Cardiac septum (tissue), 1 donor: ENCODE measurements at regions of chr1 and their contacts with region 1.

Region 1: DNA sequence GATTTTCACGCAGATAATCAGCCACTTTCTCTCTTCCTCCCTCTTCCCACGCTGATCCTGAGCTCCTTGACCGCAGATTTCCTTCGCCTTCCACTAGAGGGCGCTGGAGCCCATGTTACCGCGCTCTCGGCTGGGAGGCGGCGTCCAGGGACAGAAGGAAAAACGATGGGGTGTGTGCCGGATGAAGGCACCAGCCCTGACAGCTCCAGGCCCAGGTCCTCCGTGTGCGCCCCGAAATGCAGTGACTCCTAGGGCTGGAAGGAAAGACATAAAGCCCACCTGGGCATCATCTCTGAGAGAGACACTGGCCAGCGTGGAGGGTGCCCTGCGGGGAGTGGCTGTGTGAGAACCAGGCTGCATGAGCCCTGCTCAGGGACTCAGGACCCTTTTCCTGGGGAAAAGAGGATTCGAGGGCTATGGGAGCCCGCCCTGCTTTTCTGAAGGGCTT is 44.9 kb upstream of the CYP2J2 start:
- DNase-seq: peak; percentile 83

Region 2: DNA sequence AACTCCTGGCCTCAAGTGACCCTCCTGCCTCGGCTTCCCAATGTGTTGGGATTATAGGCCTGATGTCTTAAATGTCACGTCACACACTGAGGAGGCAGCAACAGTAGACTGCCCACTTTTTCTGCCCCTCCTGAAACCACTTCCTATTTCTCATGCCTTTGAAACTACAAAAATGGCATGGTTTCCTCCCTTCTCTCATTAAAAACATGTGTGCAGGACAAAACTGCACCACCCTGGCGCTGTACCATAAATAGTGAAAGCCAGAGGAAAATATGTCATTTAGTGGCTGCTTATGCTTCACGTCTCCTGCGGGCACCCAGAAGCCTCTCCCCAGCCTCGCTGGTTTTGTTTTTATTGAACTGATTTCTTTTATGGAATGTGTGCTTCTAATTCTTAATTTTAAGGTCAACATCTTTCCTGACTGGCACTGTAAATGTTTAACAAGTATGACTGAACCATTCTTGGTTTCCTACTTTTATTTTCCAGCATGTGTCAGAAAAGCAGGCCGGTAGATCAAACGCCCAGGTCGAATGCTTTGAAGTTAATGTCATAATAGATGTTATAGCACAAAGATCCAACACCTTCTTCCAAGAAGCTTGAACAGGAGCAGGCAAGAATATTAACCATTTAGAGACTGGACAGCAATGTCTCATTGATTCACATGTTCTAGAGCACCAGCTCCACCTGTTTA is 161.6 kb after region 1 on chr1:
- intact Hi-C with region 1: loop called (anchors 10 kb)
- DNase-seq: no peak

Region 3: GRCh38 chr1:61851849-61852669 is 1880.6 kb after region 1 on chr1:
- intact Hi-C with region 1: loop called (anchors 10 kb)
- DNase-seq: no peak